ENCODE measurements at regions of chr6 and their contacts with region 1.

Region 1: GRCh38 chr6:125307150-125307838 is 5.5 kb upstream of the HDDC2 start:
- DNase-seq: no peak
- ATAC-seq: peak; percentile 93

Region 2: DNA sequence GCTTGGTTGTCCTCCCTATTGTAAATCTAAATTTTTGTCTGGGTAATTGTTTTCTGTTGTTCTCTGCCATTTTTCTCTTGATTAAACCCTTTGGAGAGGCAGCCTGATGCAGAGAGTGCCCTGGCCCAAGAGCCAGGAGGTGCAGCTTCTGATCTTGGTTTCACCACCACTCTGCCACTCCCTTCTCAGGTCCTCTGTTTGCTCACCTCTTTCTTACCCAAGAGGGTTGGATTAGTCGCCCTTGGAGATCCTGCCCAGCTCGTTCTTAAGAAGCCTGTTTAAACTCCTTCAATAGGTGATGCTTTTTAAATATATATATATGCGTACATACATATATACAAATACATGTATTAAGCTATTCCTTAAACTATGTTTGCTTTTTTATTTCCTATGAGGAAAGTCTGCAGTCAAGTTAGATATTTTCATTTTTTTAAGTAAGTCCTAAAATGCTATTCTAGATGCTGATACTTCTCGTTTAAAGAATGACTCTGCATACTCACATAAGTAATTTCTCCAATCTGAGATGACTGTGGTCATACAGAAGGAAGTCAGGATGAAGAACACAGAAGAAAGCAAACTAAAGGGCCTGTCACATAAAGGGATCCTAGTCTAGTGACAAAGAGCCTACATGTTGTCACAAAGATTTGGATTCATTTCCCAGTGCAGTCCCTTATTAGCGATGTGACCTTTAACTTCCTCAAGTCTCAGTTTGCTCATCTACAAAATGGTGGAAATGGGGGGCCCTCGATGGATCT is 133.8 kb before region 1 on chr6:
- intact Hi-C with region 1: no loop called
- DNase-seq: no peak
- ATAC-seq: no peak

Region 3: GRCh38 chr6:125779924-125780539 is 472.7 kb after region 1 on chr6:
- intact Hi-C with region 1: loop called in 1 of 2 experiments (anchors 5 kb)
- DNase-seq: peak; percentile 70 to 78
- ATAC-seq: peak; percentile 93